HepG2 (cell line): ENCODE measurements at regions of chr1 and their contacts with region 1.

Region 1: GRCh38 chr1:225845571-225846259 is 35.8 kb downstream of the EPHX1 start:
- DNase-seq: peak; percentile 71
- ATAC-seq: peak; percentile 87
- H3K4me3 ChIP-seq: no peak overlapping the region
- H3K27ac ChIP-seq: no peak overlapping the region
- H3K4me1 ChIP-seq: no peaks in the 10 kb centered on the region
- H3K27me3 ChIP-seq: no peaks in the 10 kb centered on the region
- CTCF ChIP-seq: peak; percentile 93
- EP300 ChIP-seq: no peak
- POLR2A ChIP-seq: peak; percentile 19 to 29; a peak in 1 of 4 replicates
- RAD21 ChIP-seq: peak; percentile 91

Region 2: GRCh38 chr1:225809842-225810578 is 35.7 kb before region 1 on chr1 and contains the start of gene EPHX1:
- CTCF ChIA-PET with region 1: no interaction called
- POLR2A ChIA-PET with region 1: interaction called, 5 read pairs
- in situ Hi-C with region 1: no loop called
- intact Hi-C with region 1: loop called (anchors 2 kb)
- DNase-seq: peak; percentile 76
- ATAC-seq: peak; percentile 79
- H3K4me3 ChIP-seq: peak within 1 kb of the TSS; percentile 68 to 87 (median 80)
- H3K27ac ChIP-seq: peak within 1 kb of the TSS; percentile 69
- H3K4me1 ChIP-seq: peaks cover 54% of the 10 kb centered on the region
- H3K27me3 ChIP-seq: no peaks in the 10 kb centered on the region
- CTCF ChIP-seq: peak; percentile 52
- EP300 ChIP-seq: no peak
- POLR2A ChIP-seq: peak; percentile 65 to 91
- RAD21 ChIP-seq: peak; percentile 49
- total RNA-seq, gene EPHX1: 28.8 and 36.5 TPM in 2 replicates

Region 3: DNA sequence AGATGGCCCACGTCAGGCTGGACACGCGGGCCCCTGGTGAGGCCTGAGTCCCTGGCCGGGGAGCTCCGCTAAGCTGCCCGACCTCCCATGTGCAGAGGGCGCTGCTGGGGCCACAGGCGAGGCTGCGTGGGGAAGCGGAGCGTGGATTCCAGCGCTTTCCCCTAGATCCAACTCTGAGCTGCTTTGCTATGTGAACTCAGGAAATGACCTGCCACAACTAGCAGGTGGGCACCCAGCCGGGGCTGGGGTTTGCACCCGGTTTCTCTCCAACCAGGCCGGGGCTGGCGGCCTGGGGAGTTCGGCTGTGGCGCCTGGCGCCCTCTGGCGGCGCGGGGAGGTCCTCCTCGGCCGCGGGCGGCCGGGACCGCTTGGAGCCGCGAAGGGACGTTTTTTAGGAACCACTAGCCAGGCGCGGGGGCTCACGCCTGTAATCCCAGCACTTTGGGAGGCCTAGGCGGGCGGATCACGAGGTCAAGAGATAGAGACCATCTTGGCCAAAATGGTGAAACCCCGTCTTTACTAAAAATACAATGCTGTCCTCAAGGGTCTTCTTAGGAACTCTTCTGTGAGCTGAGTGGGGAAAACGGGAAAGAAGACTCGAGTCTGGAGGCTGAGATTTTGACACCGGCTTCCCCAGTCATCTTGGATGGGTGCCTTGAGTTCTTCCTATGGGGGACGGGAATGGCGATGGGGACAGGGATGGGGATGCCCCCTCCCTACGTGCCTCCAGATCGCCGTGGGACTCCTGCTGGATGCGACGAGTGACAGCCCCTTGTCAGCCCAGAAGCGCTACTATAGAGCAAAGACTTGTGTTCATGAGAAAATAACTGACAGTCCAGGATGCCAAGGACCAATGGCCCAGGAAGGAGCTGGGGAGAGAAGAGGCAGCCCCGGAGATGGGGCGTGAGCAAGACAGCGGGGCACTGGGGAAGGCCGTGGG is 65.7 kb after region 1 on chr1:
- CTCF ChIA-PET with region 1: interaction called, 3 read pairs
- POLR2A ChIA-PET with region 1: no interaction called
- in situ Hi-C with region 1: no loop called
- intact Hi-C with region 1: loop called (anchors 2 kb)
- DNase-seq: peak; percentile 17
- ATAC-seq: peak; percentile 88
- H3K4me3 ChIP-seq: peak overlapping the region in 1 of 3 experiments; percentile 39; a peak in 1 of 6 replicates
- H3K27ac ChIP-seq: no peak overlapping the region
- H3K4me1 ChIP-seq: peaks cover 26% of the 10 kb centered on the region
- H3K27me3 ChIP-seq: peaks cover 2 to 6% of the 10 kb centered on the region in 2 experiments; a peak in 4 of 5 replicates
- CTCF ChIP-seq: peak; percentile 78
- EP300 ChIP-seq: no peak
- POLR2A ChIP-seq: no peak
- RAD21 ChIP-seq: peak; percentile 95

Region 4: DNA sequence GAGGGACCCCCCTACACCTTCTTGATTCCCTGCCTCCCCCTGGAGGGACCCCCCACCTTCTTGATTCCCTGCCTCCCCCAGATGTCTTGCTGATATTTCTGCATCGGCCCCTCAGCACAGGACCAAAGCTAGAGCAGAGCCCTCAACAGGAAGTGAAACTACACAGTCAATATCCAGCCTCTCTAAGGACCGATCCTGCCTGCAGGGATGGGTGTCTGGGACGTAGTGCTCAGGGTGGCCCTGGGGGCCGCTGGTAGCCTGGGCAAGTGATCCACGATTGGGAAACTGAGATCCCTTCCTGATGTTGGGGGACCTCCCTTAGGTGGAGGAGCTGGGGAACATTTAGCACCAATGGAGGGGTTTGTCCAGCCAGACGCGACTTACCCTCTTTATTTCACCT is 99.2 kb after region 1 on chr1:
- CTCF ChIA-PET with region 1: no interaction called
- POLR2A ChIA-PET with region 1: no interaction called
- in situ Hi-C with region 1: no loop called
- intact Hi-C with region 1: no loop called
- DNase-seq: no peak
- ATAC-seq: 0 out of 3 replicates have a peak, but pooled peaks have one; percentile 20
- H3K4me3 ChIP-seq: no peak overlapping the region; a peak in 1 of 6 replicates
- H3K27ac ChIP-seq: no peak overlapping the region
- H3K4me1 ChIP-seq: peaks cover 42% of the 10 kb centered on the region
- H3K27me3 ChIP-seq: peaks cover 7 to 35% of the 10 kb centered on the region in 2 experiments; a peak in 4 of 5 replicates
- CTCF ChIP-seq: no peak
- EP300 ChIP-seq: no peak
- POLR2A ChIP-seq: no peak
- RAD21 ChIP-seq: no peak